Esophagus muscularis mucosa (tissue), 4 donors: ENCODE measurements at regions of chr3 and their contacts with region 1.

Region 1: GRCh38 chr3:16247276-16248061 is 17.3 kb downstream of the DPH3 start:
- DNase-seq: no peak
- H3K4me3 ChIP-seq: no peak overlapping the region
- H3K27ac ChIP-seq: no peak overlapping the region
- H3K4me1 ChIP-seq: peaks cover 7 to 19% (median 9%) of the 10 kb centered on the region in 4 donors
- H3K27me3 ChIP-seq: no peaks in the 10 kb centered on the region
- CTCF ChIP-seq: peak; percentile 86 to 94 (median 92)
- EP300 ChIP-seq: no peak
- POLR2A ChIP-seq: no peak

Region 2: DNA sequence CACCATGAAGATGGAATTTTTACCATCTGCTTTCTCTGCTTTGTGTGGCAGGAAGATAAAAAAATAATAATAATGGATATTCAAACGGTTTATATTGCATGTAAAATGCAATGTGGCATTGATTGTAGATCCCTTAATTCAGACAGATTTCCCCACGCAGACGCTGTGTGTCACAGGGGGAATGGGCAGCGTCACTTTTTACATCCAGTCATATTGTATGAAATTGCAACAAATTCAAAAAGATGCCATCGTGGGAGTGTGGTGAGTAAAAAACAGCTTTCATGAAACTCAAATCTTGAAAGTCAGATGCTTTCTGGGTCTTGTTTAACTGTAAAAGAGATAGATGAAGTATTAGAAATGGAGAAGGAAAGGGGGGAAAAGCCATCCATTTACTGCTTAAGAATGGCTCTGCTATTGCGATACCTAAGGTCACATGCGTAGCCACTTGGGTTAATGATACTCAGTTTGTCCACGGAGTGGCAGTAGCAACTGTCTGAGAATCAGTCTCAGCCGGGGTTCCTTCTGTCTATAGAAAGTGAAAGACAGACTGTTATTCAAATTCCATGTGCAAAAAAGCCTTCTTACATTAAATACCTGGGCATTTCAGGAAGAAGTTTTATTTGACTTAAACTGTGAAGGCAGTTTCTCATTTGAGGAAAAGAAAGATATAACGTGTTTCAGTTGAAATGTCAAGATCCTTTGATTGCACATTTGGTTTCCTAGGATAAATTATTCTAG is 617.4 kb before region 1 on chr3:
- intact Hi-C with region 1: loop called (anchors 10 kb)
- DNase-seq: no peak
- H3K4me3 ChIP-seq: peak overlapping the region; percentile 32 to 45 (median 41)
- H3K27ac ChIP-seq: peak overlapping the region; percentile 53 to 78 (median 68)
- H3K4me1 ChIP-seq: peaks cover 15 to 52% (median 45%) of the 10 kb centered on the region in 4 donors
- H3K27me3 ChIP-seq: no peaks in the 10 kb centered on the region
- CTCF ChIP-seq: peak; percentile 74 to 83 (median 79)
- EP300 ChIP-seq: no peak
- POLR2A ChIP-seq: no peak

Region 3: GRCh38 chr3:15815696-15816095 is 431.8 kb before region 1 on chr3:
- intact Hi-C with region 1: loop called (anchors 2 kb)
- DNase-seq: no peak
- H3K4me3 ChIP-seq: no peak overlapping the region
- H3K27ac ChIP-seq: no peak overlapping the region
- H3K4me1 ChIP-seq: peaks cover 8 to 23% (median 20%) of the 10 kb centered on the region in 4 donors
- H3K27me3 ChIP-seq: no peaks in the 10 kb centered on the region
- CTCF ChIP-seq: peak; percentile 50 to 65 (median 56)
- EP300 ChIP-seq: no peak
- POLR2A ChIP-seq: no peak

Region 4: DNA sequence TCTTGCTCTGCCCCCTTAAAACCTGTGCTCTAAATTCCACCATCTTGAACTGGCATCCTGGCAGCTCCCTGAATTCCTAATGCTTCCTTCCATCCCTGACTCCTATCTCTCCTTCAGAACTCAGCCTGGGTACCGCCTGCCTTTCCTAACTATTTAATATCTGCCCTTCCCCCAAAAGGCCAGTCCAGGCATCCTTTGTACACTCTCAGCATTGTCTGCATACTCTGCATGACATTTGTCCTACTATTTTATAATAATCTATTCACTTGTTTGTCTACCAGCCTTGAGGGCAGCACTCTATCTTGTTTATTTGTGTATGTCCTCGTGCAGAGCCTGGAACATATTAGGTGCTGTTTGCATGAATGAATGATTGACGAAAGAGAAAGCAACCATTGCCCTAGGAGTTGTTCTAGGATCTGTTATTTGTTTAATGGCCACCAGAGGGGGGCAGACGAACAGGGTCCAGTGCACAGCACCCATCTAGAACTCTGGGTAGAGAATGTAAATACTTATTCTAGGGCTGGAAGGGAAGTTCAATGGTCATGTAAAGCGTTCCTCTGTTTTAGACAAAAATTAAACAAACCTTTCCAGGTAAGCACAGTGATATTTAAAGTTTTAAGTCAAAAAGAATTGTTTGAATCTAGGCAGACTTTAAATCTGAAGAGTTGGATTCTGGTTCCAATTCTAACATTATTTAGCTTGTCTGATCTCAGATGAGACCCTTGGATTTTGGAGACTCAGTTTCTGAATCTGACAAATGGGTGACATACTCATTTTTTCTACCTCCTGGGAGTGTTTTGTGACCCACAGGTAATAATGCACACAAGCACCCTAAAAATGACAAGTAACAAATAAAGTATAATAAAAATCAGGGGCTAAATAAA is 198.8 kb before region 1 on chr3:
- intact Hi-C with region 1: loop called (anchors 2 kb)
- DNase-seq: no peak
- H3K4me3 ChIP-seq: peak overlapping the region in 1 of 4 donors; percentile 34
- H3K27ac ChIP-seq: no peak overlapping the region
- H3K4me1 ChIP-seq: peaks cover 5 to 15% (median 7%) of the 10 kb centered on the region in 4 donors
- H3K27me3 ChIP-seq: no peaks in the 10 kb centered on the region
- CTCF ChIP-seq: peak; percentile 72 to 83 (median 81)
- EP300 ChIP-seq: no peak
- POLR2A ChIP-seq: no peak

Region 5: DNA sequence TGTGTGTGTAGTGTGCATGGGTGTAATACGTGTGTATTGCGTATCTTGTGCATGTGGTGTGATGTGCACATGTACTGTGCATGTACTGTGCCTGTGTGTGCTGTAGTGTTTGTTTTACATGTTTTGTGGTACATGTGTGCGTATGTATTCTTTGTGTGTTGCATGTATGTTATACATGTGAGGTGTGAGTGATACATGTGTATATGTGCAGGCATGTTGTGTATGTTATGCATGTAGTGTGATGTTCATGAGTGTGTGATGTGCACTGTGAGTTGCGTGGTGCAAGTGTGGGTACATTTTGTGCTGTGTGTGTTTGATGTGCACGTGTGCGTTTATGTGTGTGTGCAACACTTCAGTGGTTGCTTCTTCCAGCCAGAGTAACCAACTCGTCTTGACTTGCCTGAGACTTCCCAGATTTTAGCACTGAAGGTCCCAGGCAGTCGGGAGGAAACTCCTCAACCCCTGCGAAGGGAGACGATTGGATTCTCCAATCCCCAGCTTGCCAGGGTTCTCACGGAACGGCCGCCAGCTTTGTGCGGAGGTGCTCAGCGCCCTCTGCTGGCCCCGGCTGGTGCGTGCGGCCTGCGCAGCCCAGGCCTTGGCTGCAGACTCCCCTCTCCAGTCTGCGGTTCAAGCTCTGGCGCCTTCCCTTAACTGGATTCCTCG is 69.4 kb before region 1 on chr3:
- intact Hi-C with region 1: loop called (anchors 5 kb)
- DNase-seq: peak; percentile 94
- H3K4me3 ChIP-seq: peak overlapping the region; percentile 48 to 68 (median 52)
- H3K27ac ChIP-seq: peak overlapping the region; percentile 4 to 52 (median 28)
- H3K4me1 ChIP-seq: peaks cover 13 to 69% (median 43%) of the 10 kb centered on the region in 4 donors
- H3K27me3 ChIP-seq: no peaks in the 10 kb centered on the region
- CTCF ChIP-seq: peak; percentile 91 to 99 (median 94)
- EP300 ChIP-seq: no peak
- POLR2A ChIP-seq: no peak